Left cardiac atrium (tissue), 4 donors: ENCODE measurements at regions of chr9 and their contacts with region 1.

Region 1: GRCh38 chr9:106862825-106863720 is at the start of gene ZNF462:
- DNase-seq: peak; percentile 45
- ATAC-seq: peak; percentile 53 to 66
- total RNA-seq, gene ZNF462: 18.6 to 29.3 TPM

Region 2: GRCh38 chr9:105901514-105902109 is 961.5 kb before region 1 on chr9:
- intact Hi-C with region 1: loop called in 1 of 2 experiments (anchors 2 kb)
- DNase-seq: peak; percentile 45
- ATAC-seq: peak; percentile 92 to 97

Region 3: GRCh38 chr9:106675745-106676144 is 187.3 kb before region 1 on chr9:
- intact Hi-C with region 1: loop called in 1 of 2 experiments (anchors 10 kb)
- DNase-seq: peak; percentile 36
- ATAC-seq: peak; percentile 93 to 95

Region 4: GRCh38 chr9:106921341-106921899 is 58.3 kb after region 1 on chr9:
- intact Hi-C with region 1: loop called in 1 of 2 experiments (anchors 10 kb)
- DNase-seq: peak; percentile 46
- ATAC-seq: peak; percentile 93 to 95

Region 5: DNA sequence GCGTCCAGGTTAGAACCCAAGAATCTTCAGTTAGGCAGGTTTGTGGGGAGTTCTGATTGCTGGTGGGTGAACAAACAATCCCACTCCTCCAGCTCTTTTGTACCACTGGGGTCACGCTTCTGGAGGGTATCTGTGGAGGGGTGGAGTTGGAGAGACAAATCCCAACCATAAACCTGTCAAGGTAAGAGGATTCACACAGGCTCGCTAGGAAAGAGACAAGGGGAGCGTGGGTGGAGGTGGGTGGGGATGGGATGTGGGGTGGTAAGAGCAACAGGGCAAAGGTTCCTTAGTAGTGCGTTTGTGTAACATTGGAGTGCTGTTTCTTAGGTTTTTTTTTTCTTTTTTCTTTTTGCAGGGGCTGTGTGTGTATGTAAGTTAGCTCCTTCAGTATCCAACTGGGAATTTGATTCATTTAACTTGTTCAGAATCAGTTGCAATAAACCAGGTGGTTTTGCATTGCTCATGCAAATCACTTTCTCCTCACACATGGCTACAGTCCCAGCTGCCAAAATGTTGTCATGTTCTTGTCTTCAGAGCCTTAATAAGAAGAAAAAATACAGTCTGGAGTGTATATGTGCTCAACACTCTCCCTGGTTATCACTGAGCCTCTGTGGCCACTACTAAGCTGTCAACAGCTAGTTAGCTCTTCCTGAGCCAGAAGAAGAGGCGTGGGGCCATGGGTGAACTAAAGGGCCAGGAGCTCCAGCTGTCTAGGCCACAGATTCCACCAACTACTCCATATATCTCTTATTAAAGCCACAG is 256.0 kb after region 1 on chr9:
- intact Hi-C with region 1: no loop called
- DNase-seq: no peak
- ATAC-seq: peak; percentile 91 to 92